ENCODE measurements at regions of chr5 and their contacts with region 1.

Region 1: DNA sequence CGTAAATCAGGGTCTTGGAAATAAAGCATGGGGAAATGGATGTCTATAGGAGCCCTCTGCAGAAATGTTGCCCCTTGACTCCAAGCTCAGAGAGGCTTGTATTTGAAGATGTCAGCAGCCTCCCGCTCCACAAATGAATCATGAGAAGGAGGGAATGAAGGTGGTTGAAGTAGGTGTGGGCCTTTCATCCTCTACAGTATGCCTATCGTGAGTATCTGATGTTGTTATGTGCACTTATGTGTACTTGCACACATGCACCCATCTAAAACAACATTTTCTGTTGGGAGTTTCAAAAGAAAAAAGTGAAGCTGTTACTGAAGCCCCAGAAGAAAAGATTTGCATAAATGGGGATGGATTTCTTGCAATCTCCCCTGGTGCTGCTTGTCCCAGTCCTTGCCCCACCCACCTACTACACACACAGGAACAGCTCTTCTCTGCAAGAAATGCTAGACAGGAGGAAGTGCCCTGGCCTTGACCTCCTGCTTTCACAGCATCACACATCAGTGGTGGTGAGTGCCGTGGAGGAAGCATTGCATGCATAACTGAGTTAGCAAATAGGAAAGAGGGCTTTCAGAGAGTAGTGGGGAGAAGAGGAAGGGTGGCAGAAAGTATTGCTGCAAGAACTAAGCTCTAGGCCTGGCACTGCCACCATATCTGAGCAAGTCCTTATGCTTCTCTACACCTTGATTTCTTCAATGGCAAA is 156.1 kb downstream of the SNX18 start:
- DNase-seq: peak; percentile 96 to 97 (median 96)
- H3K4me3 ChIP-seq: peak overlapping the region in 1 of 3 experiments; percentile 52
- H3K4me3 Mint-ChIP-seq: peak overlapping the region in 1 of 2 donors; percentile 51
- H3K27ac ChIP-seq: peak overlapping the region; percentile 86 to 88
- H3K27ac Mint-ChIP-seq: peak overlapping the region; percentile 98 to 100 (median 99)
- H3K4me1 ChIP-seq: peaks cover 80 to 88% of the 10 kb centered on the region in 2 donors
- H3K4me1 Mint-ChIP-seq: peaks cover 79% of the 10 kb centered on the region
- H3K27me3 ChIP-seq: no peaks in the 10 kb centered on the region
- H3K27me3 Mint-ChIP-seq: peaks cover 0 to 2% (median 0%) of the 10 kb centered on the region in 3 donors
- CTCF ChIP-seq: no peak

Region 2: DNA sequence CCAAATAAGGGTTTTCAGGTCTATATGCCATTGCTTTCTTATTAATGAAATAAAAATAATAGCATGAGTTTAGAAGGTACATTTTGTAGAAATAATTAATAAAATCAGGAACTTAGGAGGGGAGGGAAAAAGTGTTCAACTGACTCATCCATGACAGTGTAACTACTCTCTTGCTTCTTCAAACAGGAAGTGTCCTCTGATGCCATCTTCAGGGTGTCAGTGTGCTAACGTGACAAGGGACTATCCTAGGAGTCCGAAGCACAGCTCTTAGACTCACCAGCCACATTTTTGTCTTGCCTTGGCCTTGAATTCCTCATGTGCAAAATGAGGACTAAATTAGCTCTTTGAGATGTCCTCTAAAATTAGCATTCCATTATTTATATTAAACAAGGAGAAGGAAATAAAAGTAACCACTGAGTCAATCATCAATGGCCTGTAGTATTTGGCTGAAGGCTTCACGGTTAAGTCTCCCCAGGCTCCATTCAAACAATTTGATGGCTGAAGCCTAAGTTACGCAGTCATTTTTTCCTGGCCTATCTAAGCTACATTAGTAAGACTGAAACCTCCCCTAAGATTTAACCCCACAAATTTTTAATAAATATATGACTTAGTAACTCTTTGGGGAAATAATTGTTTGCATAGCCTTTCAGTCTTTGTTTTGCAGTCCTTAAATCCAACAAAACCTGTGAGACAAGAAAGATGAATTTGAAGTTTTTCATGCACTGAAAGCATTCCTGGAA is 514.4 kb before region 1 on chr5:
- intact Hi-C with region 1: no loop called
- DNase-seq: peak; percentile 74 to 89 (median 77)
- H3K4me3 ChIP-seq: no peak overlapping the region
- H3K4me3 Mint-ChIP-seq: no peak overlapping the region
- H3K27ac ChIP-seq: peak overlapping the region in 1 of 2 donors; percentile 17
- H3K27ac Mint-ChIP-seq: peak overlapping the region in 4 of 7 donors; percentile 18 to 78 (median 32)
- H3K4me1 ChIP-seq: peaks cover 0 to 11% of the 10 kb centered on the region in 2 donors
- H3K4me1 Mint-ChIP-seq: peaks cover 5% of the 10 kb centered on the region
- H3K27me3 ChIP-seq: no peaks in the 10 kb centered on the region
- H3K27me3 Mint-ChIP-seq: peaks cover 0 to 3% (median 0%) of the 10 kb centered on the region in 3 donors
- CTCF ChIP-seq: peak; percentile 28

Region 3: DNA sequence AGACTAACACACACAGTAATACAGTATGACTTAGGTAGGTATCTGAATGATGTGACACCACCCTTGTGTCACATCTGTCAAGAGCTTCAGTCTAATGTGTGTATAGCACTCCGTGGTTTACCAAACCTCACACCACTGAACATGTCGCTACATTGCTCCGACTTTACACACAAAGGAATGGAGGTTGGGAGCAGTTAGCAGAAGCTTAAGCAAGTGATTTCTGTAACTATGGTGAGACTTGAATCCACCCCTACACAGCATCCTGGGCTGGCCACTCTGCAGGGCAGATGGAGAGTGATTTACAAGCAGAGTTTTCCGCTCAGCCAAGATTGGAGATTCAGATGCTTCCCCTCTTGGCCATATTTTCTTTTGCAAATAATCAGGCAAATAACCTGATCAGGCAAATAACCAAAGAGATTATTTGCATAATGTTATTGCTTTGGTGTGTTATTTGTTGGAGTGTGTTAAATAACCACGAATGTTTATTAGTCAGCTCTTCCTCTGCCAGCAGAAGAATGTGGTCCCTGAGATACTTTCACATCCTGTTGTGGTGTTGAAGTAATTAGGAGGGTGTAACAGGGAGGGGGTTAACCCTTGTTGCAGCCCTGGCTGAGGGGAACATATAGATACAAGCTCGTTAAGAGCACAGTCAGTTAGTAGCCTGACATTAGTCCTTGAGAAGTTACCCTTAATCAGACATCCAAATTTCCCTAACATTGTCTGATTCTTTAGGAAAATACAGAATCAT is 63.3 kb before region 1 on chr5:
- intact Hi-C with region 1: loop called in 1 of 2 experiments (anchors 1 kb)
- DNase-seq: peak; percentile 76 to 84 (median 82)
- H3K4me3 ChIP-seq: peak overlapping the region in 1 of 3 experiments; percentile 42
- H3K4me3 Mint-ChIP-seq: peak overlapping the region; percentile 6 to 76
- H3K27ac ChIP-seq: peak overlapping the region; percentile 59 to 83
- H3K27ac Mint-ChIP-seq: peak overlapping the region; percentile 91 to 97 (median 94)
- H3K4me1 ChIP-seq: peaks cover 69 to 74% of the 10 kb centered on the region in 2 donors
- H3K4me1 Mint-ChIP-seq: peaks cover 72% of the 10 kb centered on the region
- H3K27me3 ChIP-seq: no peaks in the 10 kb centered on the region
- H3K27me3 Mint-ChIP-seq: no peaks in the 10 kb centered on the region
- CTCF ChIP-seq: no peak

Region 4: DNA sequence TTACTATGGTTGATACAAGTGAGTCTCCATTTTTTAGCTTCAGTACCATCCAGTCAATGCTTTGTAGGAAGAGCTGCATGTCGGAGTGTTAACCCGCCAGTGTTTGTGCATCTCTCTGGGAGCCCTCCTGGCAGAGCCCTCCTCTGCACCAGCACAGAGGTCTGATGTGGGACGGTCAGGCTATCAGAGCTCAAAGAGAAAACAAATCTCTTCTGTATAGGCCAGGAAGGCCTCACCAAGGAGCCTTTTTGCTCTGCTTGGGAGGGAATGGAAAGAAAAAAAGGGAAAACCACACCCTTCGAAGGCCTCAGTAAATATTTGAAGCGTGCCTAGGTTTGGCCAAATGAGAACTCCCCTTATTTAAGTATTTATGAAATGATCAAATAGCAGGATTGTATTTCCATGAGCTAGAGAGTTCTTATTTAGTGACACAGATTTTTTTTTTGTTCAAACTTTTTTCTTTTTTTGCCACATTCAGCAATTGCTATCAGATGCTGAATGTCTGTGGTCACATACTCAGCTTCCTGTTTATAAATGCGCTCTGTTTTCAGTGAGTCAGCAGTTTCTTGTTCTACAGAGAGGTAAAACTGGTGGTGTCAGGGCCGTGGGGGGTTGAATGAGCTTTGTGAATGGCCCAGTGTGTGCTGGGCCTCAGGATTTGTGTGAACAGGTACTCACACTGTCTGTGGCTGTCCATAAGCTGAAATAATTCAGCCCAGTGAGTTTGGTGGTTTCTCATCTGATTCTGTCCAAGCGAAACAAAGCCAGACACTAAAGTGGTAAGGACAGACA is 70.5 kb after region 1 on chr5:
- intact Hi-C with region 1: loop called in 1 of 2 experiments (anchors 5 kb)
- DNase-seq: peak; percentile 74 to 89 (median 82)
- H3K4me3 ChIP-seq: peak overlapping the region in 2 of 3 experiments; percentile 23 to 54
- H3K4me3 Mint-ChIP-seq: peak overlapping the region; percentile 65 to 82
- H3K27ac ChIP-seq: peak overlapping the region; percentile 51 to 78
- H3K27ac Mint-ChIP-seq: peak overlapping the region; percentile 91 to 98 (median 94)
- H3K4me1 ChIP-seq: peaks cover 28 to 47% of the 10 kb centered on the region in 2 donors
- H3K4me1 Mint-ChIP-seq: peaks cover 40% of the 10 kb centered on the region
- H3K27me3 ChIP-seq: no peaks in the 10 kb centered on the region
- H3K27me3 Mint-ChIP-seq: peaks cover 0 to 3% (median 2%) of the 10 kb centered on the region in 3 donors
- CTCF ChIP-seq: no peak

Region 5: DNA sequence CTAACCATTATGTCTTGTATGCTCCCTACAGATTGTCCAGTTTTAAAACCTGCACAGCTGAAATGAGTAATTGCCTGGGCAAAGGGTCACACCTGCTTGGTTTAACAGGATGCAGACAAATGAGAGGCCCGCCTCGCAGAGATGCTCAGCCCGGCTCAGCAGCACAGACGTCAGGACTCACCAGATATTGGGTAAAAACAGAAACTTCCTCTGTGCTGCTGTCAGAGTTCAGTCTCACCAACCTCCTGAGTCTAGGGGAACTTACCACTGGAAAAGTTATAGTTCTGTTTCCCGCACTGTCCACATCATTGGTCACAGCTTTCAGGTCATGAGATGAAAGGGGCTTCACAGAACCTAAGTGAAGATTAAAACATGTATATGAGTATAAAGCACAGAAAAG is 159.2 kb after region 1 on chr5:
- intact Hi-C with region 1: loop called in 1 of 2 experiments (anchors 10 kb)
- DNase-seq: peak; percentile 55 to 93 (median 66)
- H3K4me3 ChIP-seq: no peak overlapping the region
- H3K4me3 Mint-ChIP-seq: no peak overlapping the region
- H3K27ac ChIP-seq: peak overlapping the region in 1 of 2 donors; percentile 69
- H3K27ac Mint-ChIP-seq: peak overlapping the region; percentile 25 to 83 (median 70)
- H3K4me1 ChIP-seq: peaks cover 27 to 35% of the 10 kb centered on the region in 2 donors
- H3K4me1 Mint-ChIP-seq: peaks cover 40% of the 10 kb centered on the region
- H3K27me3 ChIP-seq: peaks cover 0 to 2% of the 10 kb centered on the region in 2 donors
- H3K27me3 Mint-ChIP-seq: peaks cover 3 to 7% (median 3%) of the 10 kb centered on the region in 3 donors
- CTCF ChIP-seq: no peak